ENCODE measurements at regions of chrX and their contacts with region 1.

Region 1: DNA sequence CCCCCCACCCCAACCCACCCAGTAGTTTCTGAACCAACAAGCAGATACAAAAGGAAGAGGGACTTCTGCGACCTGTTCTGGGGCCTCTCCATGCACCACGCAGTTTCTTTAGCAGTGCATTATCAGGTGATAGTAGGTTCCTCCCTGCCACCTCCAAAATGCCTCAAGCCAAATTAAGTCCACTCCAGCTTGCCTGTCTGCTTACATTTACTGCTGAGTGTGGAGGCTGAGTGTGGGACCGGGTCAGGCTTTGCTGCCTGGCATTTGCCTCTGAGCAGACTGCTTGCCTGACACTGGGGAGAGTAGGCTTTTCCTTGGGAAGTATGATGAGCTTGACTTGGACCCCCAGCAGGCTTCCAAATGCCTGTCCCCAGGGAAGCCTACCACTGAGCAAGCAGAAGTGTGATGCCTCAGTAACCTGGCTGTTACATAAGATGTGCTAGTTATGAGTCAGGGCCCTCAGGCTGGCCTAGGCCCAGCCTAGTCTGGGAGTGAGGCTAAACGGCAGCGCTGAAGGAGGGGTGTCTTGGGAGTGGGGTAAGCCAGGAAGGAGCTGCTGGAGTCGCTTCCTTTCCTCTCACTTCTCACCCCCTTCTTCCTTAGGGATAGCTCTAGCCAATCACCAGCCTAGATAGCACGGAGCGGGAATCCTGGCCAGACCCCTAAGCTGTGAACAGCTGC is 9.0 kb downstream of the TSC22D3 start:
- DNase-seq: peak; percentile 78
- H3K4me3 Mint-ChIP-seq: no peak overlapping the region
- H3K27ac Mint-ChIP-seq: no peak overlapping the region
- H3K4me1 Mint-ChIP-seq: no peaks in the 10 kb centered on the region
- H3K27me3 Mint-ChIP-seq: peaks cover 64% of the 10 kb centered on the region
- CTCF ChIP-seq: no peak

Region 2: DNA sequence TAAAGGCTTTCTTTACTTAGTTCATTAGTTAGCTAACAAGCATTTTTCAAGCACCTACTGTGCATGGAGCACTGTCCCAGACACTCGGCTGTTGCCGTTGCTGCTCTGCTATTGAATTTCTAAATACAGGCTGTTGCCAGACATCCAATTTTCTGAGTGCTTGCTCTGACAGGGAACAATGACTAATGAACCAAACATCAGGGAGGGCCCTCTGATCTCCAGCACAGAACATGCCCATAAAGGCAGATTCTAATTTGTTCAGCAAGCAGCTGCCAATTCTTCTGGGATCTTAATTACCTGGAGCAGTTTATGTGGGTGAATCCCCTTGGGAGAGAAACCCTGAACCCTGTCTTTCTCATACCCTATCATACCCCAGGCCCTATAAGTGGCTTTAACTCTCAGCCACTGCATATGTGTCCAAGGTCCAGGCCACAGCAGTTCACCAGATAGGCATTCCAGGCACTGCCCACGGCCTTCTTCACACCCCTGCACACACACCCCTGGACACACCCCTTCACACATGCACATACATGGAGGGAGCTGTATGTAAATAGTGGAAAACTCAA is 18.9 kb before region 1 on chrX:
- CTCF ChIA-PET with region 1: interaction called, 5 read pairs
- POLR2A ChIA-PET with region 1: interaction called, 21 read pairs
- intact Hi-C with region 1: no loop called
- DNase-seq: peak; percentile 68
- H3K4me3 Mint-ChIP-seq: peak overlapping the region; percentile 5
- H3K27ac Mint-ChIP-seq: peak overlapping the region; percentile 88
- H3K4me1 Mint-ChIP-seq: peaks cover 27% of the 10 kb centered on the region
- H3K27me3 Mint-ChIP-seq: peaks cover 61% of the 10 kb centered on the region
- CTCF ChIP-seq: no peak